Right lobe of liver (tissue), 6 donors: ENCODE measurements at regions of chr3 and their contacts with region 1.

Region 1: GRCh38 chr3:73060302-73060723 is 1.1 kb upstream of the EBLN2 start:
- DNase-seq: no peak
- ATAC-seq: no peak
- H3K4me3 ChIP-seq: no peak overlapping the region
- H3K27ac ChIP-seq: no peak overlapping the region
- H3K4me1 ChIP-seq: peaks cover 0 to 8% (median 0%) of the 10 kb centered on the region in 4 donors
- H3K27me3 ChIP-seq: no peaks in the 10 kb centered on the region
- CTCF ChIP-seq: no peak
- POLR2A ChIP-seq: no peak

Region 2: DNA sequence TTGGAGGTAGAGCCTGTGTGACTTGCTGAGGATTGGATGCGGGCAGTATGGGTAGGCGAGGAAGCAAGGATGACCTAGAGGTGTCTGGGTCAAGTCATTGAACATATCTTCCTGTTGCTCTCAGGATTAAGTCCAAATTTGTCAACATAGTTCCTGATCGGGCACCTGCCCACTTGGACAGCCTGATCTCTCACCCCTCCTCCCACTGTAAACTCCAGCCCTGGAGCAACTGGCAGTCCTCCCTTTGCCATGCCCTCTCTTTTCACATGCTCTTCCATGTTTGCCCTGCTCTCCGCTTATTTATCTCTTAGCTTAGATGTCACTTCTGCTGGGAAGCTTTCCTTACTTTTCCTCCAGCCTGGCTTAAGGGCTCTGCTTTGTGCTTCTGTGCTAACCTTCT is 111.3 kb before region 1 on chr3:
- intact Hi-C with region 1: loop called in 1 of 2 experiments (anchors 10 kb)
- DNase-seq: peak; percentile 58 to 85 (median 82)
- ATAC-seq: peak; percentile 87 to 94 (median 90)
- H3K4me3 ChIP-seq: no peak overlapping the region
- H3K27ac ChIP-seq: peak overlapping the region in 2 of 3 donors; percentile 62 to 78
- H3K4me1 ChIP-seq: peaks cover 0 to 43% (median 7%) of the 10 kb centered on the region in 4 donors
- H3K27me3 ChIP-seq: no peaks in the 10 kb centered on the region
- CTCF ChIP-seq: no peak
- POLR2A ChIP-seq: no peak